ENCODE measurements at regions of chr14 and their contacts with region 1.

Region 1: GRCh38 chr14:77707724-77708408 is at the starts of genes ALKBH1 and SLIRP:
- DNase-seq: peak; percentile 83 to 87
- H3K4me3 ChIP-seq: peak within 1 kb of the TSS; percentile 71
- H3K4me3 Mint-ChIP-seq: peak within 1 kb of the TSS; percentile 86
- H3K27ac Mint-ChIP-seq: peak within 1 kb of the TSS; percentile 77
- H3K4me1 ChIP-seq: peaks cover 8% of the 10 kb centered on the region; the same call in 1 of the 2 replicates
- H3K4me1 Mint-ChIP-seq: peaks cover 17% of the 10 kb centered on the region
- H3K27me3 ChIP-seq: no peaks in the 10 kb centered on the region
- H3K27me3 Mint-ChIP-seq: no peaks in the 10 kb centered on the region
- CTCF ChIP-seq: no peak
- total RNA-seq, gene ALKBH1: 17.1 and 18.7 TPM in 2 replicates
- total RNA-seq, gene SLIRP: 204 and 208 TPM in 2 replicates

Region 2: GRCh38 chr14:77616454-77617229 is 91.2 kb before region 1 on chr14 and contains the start of gene SPTLC2:
- CTCF ChIA-PET with region 1: no interaction called
- POLR2A ChIA-PET with region 1: no interaction called
- intact Hi-C with region 1: loop called (anchors 5 kb)
- DNase-seq: peak; percentile 99 to 100
- H3K4me3 ChIP-seq: peak within 1 kb of the TSS; percentile 92
- H3K4me3 Mint-ChIP-seq: peak within 1 kb of the TSS; percentile 81
- H3K27ac Mint-ChIP-seq: peak within 1 kb of the TSS; percentile 74
- H3K4me1 ChIP-seq: peaks cover 28% of the 10 kb centered on the region
- H3K4me1 Mint-ChIP-seq: peaks cover 30% of the 10 kb centered on the region
- H3K27me3 ChIP-seq: no peaks in the 10 kb centered on the region
- H3K27me3 Mint-ChIP-seq: no peaks in the 10 kb centered on the region
- CTCF ChIP-seq: peak; percentile 15 to 45
- total RNA-seq, gene SPTLC2: 45.8 and 49.6 TPM in 2 replicates

Region 3: GRCh38 chr14:77738559-77739250 is 30.8 kb after region 1 on chr14:
- CTCF ChIA-PET with region 1: no interaction called
- POLR2A ChIA-PET with region 1: no interaction called
- intact Hi-C with region 1: no loop called
- DNase-seq: no peak
- H3K4me3 ChIP-seq: no peak overlapping the region
- H3K4me3 Mint-ChIP-seq: no peak overlapping the region
- H3K27ac Mint-ChIP-seq: no peak overlapping the region
- H3K4me1 ChIP-seq: peaks cover 6% of the 10 kb centered on the region; the same call in 1 of the 2 replicates
- H3K4me1 Mint-ChIP-seq: peaks cover 7% of the 10 kb centered on the region
- H3K27me3 ChIP-seq: no peaks in the 10 kb centered on the region
- H3K27me3 Mint-ChIP-seq: no peaks in the 10 kb centered on the region
- CTCF ChIP-seq: no peak